ENCODE measurements at regions of chr12 and their contacts with region 1.

Region 1: GRCh38 chr12:120216742-120217605 is 16.1 kb upstream of the RPLP0 start:
- DNase-seq: peak; percentile 62
- H3K4me3 ChIP-seq: no peak overlapping the region
- H3K27ac ChIP-seq: no peak overlapping the region
- H3K4me1 ChIP-seq: no peaks in the 10 kb centered on the region
- H3K27me3 ChIP-seq: no peaks in the 10 kb centered on the region
- CTCF ChIP-seq: no peak
- EP300 ChIP-seq: no peak
- RAD21 ChIP-seq: no peak

Region 2: DNA sequence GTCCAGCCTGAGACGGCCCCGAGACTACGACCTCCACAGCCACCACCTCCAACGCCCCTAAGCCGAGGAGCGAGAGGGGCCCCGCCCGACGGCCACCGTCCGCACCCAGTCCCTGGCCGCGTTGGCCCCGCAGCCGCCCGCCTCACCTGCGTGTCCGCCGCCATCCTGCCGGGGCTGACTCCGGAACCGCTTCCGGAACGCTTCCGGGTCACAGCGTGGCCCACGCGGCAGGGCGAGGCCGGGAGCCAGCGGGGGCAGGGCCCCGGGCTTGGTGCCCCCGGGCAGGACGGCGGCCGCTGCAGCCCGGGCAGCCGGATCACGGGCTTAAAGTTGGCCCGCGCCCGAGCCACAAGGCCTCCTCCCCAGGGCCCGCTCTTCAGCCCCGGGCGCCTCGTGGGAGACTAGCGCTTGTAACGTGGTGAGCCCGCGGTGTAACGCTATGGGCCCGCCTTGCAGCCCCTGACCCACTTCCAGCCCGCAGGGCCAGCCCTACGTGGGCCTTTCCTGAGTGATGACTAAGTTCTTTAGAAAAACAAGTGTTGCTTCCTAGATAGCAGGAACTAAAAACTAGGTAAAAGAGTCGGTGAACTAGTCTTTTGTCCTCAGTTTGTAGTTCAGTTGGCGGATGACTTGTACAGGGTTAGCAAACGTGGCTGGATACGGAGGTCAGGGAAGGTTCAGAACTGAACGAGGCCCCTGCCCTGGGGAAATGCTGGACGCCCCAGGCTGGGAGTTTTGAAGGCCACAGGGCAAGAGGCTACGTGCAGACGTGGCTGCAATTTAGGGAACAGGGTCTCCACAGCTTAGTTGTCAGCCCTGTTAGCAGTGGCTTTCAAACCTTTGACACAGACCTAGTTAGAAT is 22.2 kb before region 1 on chr12 and contains the start of gene GCN1:
- CTCF ChIA-PET with region 1: no interaction called
- POLR2A ChIA-PET with region 1: interaction called, 28 read pairs
- DNase-seq: peak; percentile 94
- H3K4me3 ChIP-seq: peak within 1 kb of the TSS; percentile 67 to 88
- H3K27ac ChIP-seq: peak within 1 kb of the TSS; percentile 86 to 93
- H3K4me1 ChIP-seq: peaks cover 23 to 35% of the 10 kb centered on the region in 2 experiments
- H3K27me3 ChIP-seq: no peaks in the 10 kb centered on the region
- CTCF ChIP-seq: no peak
- EP300 ChIP-seq: no peak; a peak in 1 of 4 replicates
- RAD21 ChIP-seq: no peak
- polyA plus RNA-seq, gene GCN1: 41.2 and 54.4 TPM in 2 replicates

Measured in SK-N-SH (cell line).